ENCODE measurements at regions of chr20 and their contacts with region 1.

Region 1: DNA sequence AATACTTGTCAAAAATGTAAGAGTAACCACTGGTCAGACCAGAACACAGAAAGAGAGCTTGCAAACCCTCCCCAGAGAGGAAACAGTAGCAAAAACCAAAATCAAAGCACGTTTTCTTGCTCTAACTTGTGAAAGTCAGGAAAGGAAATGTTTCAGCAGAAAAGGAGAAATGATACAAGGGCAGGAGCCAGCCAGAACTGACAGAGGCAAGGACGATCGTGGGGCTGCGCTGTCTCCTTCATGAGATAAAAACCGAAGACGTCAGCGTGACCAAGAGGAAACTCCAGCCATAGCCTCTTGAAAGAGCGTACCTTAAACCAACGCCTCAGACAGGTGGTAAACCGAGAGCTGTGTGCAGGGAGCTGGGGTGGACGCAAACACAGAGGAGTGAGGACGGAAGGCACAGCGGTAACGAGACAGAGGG is 27.5 kb downstream of the LAMA5 start:
- DNase-seq: peak; percentile 90
- ATAC-seq: peak; percentile 59
- H3K4me3 ChIP-seq: peak overlapping the region in 4 of 5 experiments; percentile 31 to 68 (median 50)
- H3K4me3 Mint-ChIP-seq: peak overlapping the region; percentile 84
- H3K27ac ChIP-seq: peak overlapping the region; percentile 86 to 87
- H3K27ac Mint-ChIP-seq: peak overlapping the region; percentile 95
- H3K4me1 ChIP-seq: peaks cover 53 to 61% of the 10 kb centered on the region in 2 donors
- H3K4me1 Mint-ChIP-seq: peaks cover 48% of the 10 kb centered on the region
- H3K27me3 ChIP-seq: no peaks in the 10 kb centered on the region
- H3K27me3 Mint-ChIP-seq: no peaks in the 10 kb centered on the region
- CTCF ChIP-seq: no peak

Region 2: GRCh38 chr20:62368976-62369814 is 29.5 kb after region 1 on chr20:
- CTCF ChIA-PET with region 1: interaction called, 8 read pairs
- POLR2A ChIA-PET with region 1: interaction called, 43 read pairs
- intact Hi-C with region 1: loop called (anchors 2 kb)
- DNase-seq: peak; percentile 27
- ATAC-seq: no peak
- H3K4me3 ChIP-seq: no peak overlapping the region
- H3K4me3 Mint-ChIP-seq: peak overlapping the region; percentile 80
- H3K27ac ChIP-seq: no peak overlapping the region
- H3K27ac Mint-ChIP-seq: no peak overlapping the region
- H3K4me1 ChIP-seq: peaks cover 25 to 34% of the 10 kb centered on the region in 2 donors
- H3K4me1 Mint-ChIP-seq: peaks cover 19% of the 10 kb centered on the region
- H3K27me3 ChIP-seq: peaks cover 0 to 46% (median 12%) of the 10 kb centered on the region in 4 experiments
- H3K27me3 Mint-ChIP-seq: peaks cover 6% of the 10 kb centered on the region
- CTCF ChIP-seq: peak; percentile 31

Measured in B cell (primary cell).